ENCODE measurements at regions of chrX and their contacts with region 1.

Region 1: GRCh38 chrX:130539721-130540321 is 138.0 kb downstream of the RBMX2 start:
- DNase-seq: peak in 1 of 2 experiments; percentile 36
- H3K4me3 ChIP-seq: no peak overlapping the region
- H3K27ac ChIP-seq: no peak overlapping the region
- H3K4me1 ChIP-seq: no peaks in the 10 kb centered on the region
- H3K27me3 ChIP-seq: peaks cover 18% of the 10 kb centered on the region; the same call in 1 of the 2 replicates
- CTCF ChIP-seq: peak; percentile 86

Region 2: GRCh38 chrX:130330706-130331105 is 209.1 kb before region 1 on chrX:
- CTCF ChIA-PET with region 1: no interaction called
- POLR2A ChIA-PET with region 1: no interaction called
- intact Hi-C with region 1: loop called (anchors 1 kb)
- DNase-seq: peak; percentile 43 to 48
- H3K4me3 ChIP-seq: peak overlapping the region; percentile 36; the same call in 1 of the 2 replicates
- H3K27ac ChIP-seq: no peak overlapping the region
- H3K4me1 ChIP-seq: peaks cover 14% of the 10 kb centered on the region
- H3K27me3 ChIP-seq: no peaks in the 10 kb centered on the region
- CTCF ChIP-seq: peak; percentile 77

Region 3: GRCh38 chrX:130393451-130394074 is 146.3 kb before region 1 on chrX:
- CTCF ChIA-PET with region 1: no interaction called
- POLR2A ChIA-PET with region 1: no interaction called
- intact Hi-C with region 1: loop called (anchors 1 kb)
- DNase-seq: peak; percentile 52 to 61
- H3K4me3 ChIP-seq: no peak overlapping the region
- H3K27ac ChIP-seq: no peak overlapping the region
- H3K4me1 ChIP-seq: no peaks in the 10 kb centered on the region
- H3K27me3 ChIP-seq: peaks cover 24% of the 10 kb centered on the region
- CTCF ChIP-seq: peak; percentile 76

Region 4: GRCh38 chrX:130552444-130553073 is 12.7 kb after region 1 on chrX:
- CTCF ChIA-PET with region 1: no interaction called
- POLR2A ChIA-PET with region 1: no interaction called
- intact Hi-C with region 1: no loop called
- DNase-seq: no peak
- H3K4me3 ChIP-seq: no peak overlapping the region
- H3K27ac ChIP-seq: no peak overlapping the region
- H3K4me1 ChIP-seq: no peaks in the 10 kb centered on the region
- H3K27me3 ChIP-seq: peaks cover 17% of the 10 kb centered on the region
- CTCF ChIP-seq: no peak

Region 5: GRCh38 chrX:130575831-130576389 is 36.1 kb after region 1 on chrX:
- CTCF ChIA-PET with region 1: no interaction called
- POLR2A ChIA-PET with region 1: no interaction called
- intact Hi-C with region 1: no loop called
- DNase-seq: peak in 1 of 2 experiments; percentile 20
- H3K4me3 ChIP-seq: no peak overlapping the region
- H3K27ac ChIP-seq: no peak overlapping the region
- H3K4me1 ChIP-seq: no peaks in the 10 kb centered on the region; the same call in 1 of the 2 replicates
- H3K27me3 ChIP-seq: no peaks in the 10 kb centered on the region
- CTCF ChIP-seq: peak; percentile 85